Mammary epithelial cell (primary cell): ENCODE measurements at regions of chr18 and their contacts with region 1.

Region 1: DNA sequence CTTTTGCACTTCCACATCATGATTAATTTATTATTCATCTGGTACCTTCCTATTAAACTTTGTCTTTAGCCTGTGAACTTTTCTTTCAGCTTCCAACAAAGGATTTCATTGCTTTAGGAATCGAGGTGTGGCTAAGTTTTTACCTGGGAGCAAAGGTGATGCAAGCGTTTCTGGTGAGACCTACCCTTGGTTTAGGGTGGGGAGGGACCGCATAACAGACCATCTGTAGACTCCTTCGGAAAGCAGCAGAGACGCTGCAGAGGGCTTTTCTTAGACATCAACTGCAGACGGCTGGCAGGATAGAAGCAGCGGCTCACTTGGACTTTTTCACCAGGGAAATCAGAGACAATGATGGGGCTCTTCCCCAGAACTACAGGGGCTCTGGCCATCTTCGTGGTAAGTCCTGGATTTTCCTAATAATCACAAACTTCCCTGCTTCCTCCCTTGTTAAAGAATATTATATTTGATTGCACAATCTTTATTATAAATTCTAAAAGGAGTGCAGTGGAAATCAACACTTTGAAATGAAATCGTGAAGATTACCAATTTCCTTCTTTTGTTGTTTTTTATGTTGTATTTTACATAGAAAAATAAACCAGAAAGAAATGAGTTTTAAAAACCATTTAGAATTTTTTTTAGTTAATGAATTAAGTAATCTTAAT is at the start of gene DSG3:
- DNase-seq: peak; percentile 99
- H3K4me3 ChIP-seq: peak within 1 kb of the TSS; percentile 66 to 100 (median 89)
- H3K27ac ChIP-seq: peak within 1 kb of the TSS; percentile 99
- H3K4me1 ChIP-seq: peaks cover 18% of the 10 kb centered on the region
- H3K27me3 ChIP-seq: no peaks in the 10 kb centered on the region
- CTCF ChIP-seq: no peak
- total RNA-seq, gene DSG3: 183 to 383 TPM

Region 2: GRCh38 chr18:30971338-30971956 is 476.2 kb before region 1 on chr18:
- CTCF ChIA-PET with region 1: no interaction called
- dilution Hi-C with region 1: no loop called
- in situ Hi-C with region 1: no loop called
- intact Hi-C with region 1: loop called (anchors 10 kb)
- DNase-seq: no peak
- H3K4me3 ChIP-seq: no peak overlapping the region
- H3K27ac ChIP-seq: no peak overlapping the region
- H3K4me1 ChIP-seq: peaks cover 4% of the 10 kb centered on the region
- H3K27me3 ChIP-seq: no peaks in the 10 kb centered on the region
- CTCF ChIP-seq: peak; percentile 47 to 63

Region 3: GRCh38 chr18:31356025-31356424 is 91.6 kb before region 1 on chr18:
- CTCF ChIA-PET with region 1: no interaction called
- dilution Hi-C with region 1: no loop called
- in situ Hi-C with region 1: no loop called
- intact Hi-C with region 1: no loop called
- DNase-seq: no peak
- H3K4me3 ChIP-seq: no peak overlapping the region
- H3K27ac ChIP-seq: no peak overlapping the region
- H3K4me1 ChIP-seq: no peaks in the 10 kb centered on the region
- H3K27me3 ChIP-seq: no peaks in the 10 kb centered on the region
- CTCF ChIP-seq: no peak

Region 4: DNA sequence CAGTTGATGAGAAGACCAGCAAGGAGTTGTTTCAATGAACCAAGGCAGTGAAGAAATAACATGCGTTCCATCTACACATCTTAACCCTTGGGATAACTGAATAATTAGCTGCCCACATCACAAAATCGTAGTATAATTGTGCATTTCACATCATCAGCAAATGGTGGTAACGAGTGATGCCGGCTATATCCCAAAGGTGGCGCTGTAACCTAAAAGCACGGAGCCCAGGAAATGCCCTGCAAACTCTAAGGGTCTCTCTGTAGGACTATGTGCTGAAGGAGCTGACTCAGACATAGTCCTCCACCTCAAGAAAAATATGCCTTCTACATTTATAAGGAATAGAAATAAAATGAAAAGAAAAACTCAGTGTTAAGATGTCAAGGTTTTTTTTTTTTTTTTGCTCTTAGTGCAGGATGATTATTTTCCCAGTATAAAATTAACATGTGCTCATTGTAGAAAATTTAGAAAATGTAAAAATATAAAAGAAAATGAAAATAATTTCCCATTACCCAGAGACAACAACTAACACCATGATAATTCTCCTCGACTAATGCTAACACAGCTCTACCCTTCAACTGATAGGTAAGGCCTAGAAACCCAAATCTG is 23.2 kb before region 1 on chr18:
- CTCF ChIA-PET with region 1: no interaction called
- dilution Hi-C with region 1: no loop called
- in situ Hi-C with region 1: no loop called
- intact Hi-C with region 1: loop called (anchors 2 kb)
- DNase-seq: peak; percentile 31
- H3K4me3 ChIP-seq: no peak overlapping the region
- H3K27ac ChIP-seq: no peak overlapping the region
- H3K4me1 ChIP-seq: peaks cover 25% of the 10 kb centered on the region
- H3K27me3 ChIP-seq: no peaks in the 10 kb centered on the region
- CTCF ChIP-seq: peak; percentile 96 to 99